Activated CD4-positive, alpha-beta memory T cell treated with anti-CD3 and anti-CD28 coated beads for 36 hours (primary cell): ENCODE measurements at regions of chrX and their contacts with region 1.

Region 1: GRCh38 chrX:107025545-107025944 is 25.5 kb upstream of the MORC4 start:
- DNase-seq: no peak
- H3K4me3 Mint-ChIP-seq: no peak overlapping the region
- H3K27ac Mint-ChIP-seq: no peak overlapping the region
- H3K4me1 Mint-ChIP-seq: no peaks in the 10 kb centered on the region
- H3K27me3 Mint-ChIP-seq: no peaks in the 10 kb centered on the region

Region 2: GRCh38 chrX:106963111-106963510 is 62.4 kb before region 1 on chrX:
- CTCF ChIA-PET with region 1: no interaction called
- POLR2A ChIA-PET with region 1: no interaction called
- intact Hi-C with region 1: no loop called
- DNase-seq: no peak
- H3K4me3 Mint-ChIP-seq: no peak overlapping the region
- H3K27ac Mint-ChIP-seq: no peak overlapping the region
- H3K4me1 Mint-ChIP-seq: no peaks in the 10 kb centered on the region
- H3K27me3 Mint-ChIP-seq: no peaks in the 10 kb centered on the region

Region 3: DNA sequence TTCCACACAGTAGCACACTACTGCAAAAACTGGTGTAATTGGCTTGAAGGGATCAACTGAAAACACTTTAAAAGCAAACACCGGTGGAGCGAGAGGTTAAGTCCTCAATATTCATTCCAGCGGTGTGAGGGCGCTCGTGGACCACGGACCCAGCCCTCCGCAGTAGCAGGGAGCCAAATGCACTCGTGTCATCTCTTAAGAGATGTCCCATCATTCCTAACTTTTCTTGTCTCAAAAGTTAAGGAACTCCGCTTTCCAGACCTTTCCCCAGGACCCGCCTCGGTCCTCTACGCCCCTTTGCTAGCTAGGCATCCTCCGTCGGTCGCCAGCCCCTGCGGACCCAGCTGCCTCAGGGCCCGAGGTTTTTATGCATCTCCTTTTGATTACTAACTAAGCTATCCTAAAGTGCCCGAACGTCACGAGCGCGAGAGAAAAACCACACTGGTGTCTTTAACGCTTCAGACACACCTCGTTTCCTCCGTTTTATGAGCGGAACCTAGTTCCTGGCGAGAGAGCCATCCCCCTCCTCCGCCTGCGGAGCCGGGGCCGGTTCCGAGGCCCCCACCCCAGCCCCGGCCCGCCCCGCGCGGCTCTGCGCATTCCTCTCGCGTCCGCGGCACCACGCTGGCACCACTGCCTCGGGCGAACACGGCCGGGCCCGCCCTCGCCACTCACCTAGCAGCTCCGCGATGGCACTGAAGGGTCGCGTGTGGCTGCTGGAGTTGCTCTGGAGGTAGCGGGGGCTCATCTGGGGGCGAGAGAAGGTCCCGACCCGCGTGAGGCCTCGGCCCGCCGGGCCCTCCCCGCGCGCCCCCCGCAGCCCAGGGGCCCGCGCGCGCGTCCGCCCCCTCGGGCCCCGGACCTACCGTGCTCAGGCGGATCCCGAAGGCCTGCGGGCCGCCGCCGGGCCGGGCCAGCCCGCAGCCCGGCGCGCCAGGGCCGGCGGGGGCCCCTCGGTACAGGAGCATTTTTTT is 26.3 kb before region 1 on chrX:
- CTCF ChIA-PET with region 1: no interaction called
- POLR2A ChIA-PET with region 1: no interaction called
- intact Hi-C with region 1: no loop called
- DNase-seq: peak; percentile 62
- H3K4me3 Mint-ChIP-seq: peak overlapping the region; percentile 70
- H3K27ac Mint-ChIP-seq: no peak overlapping the region
- H3K4me1 Mint-ChIP-seq: peaks cover 7% of the 10 kb centered on the region
- H3K27me3 Mint-ChIP-seq: no peaks in the 10 kb centered on the region

Region 4: DNA sequence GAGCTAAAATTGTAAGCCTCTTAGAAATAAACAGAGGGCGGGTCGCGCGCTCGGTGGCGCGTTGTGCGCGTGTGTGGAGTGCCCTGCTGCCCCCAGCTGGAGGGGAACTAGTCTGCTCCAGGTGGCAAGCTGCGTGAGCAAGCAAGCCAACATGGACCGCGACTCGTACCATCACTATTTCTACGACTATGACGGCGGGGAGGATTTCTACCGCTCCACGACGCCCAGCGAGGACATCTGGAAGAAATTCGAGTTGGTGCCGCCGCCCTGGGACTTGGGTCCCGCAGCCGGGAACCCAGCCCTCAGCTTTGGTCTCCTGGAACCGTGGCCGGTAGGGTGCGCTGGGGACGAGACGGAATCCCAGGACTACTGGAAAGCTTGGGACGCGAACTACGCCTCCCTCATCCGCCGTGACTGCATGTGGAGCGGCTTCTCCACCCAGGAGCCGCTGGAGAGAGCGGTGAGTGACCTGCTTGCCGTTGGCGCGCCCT is 246.9 kb after region 1 on chrX:
- CTCF ChIA-PET with region 1: no interaction called
- POLR2A ChIA-PET with region 1: no interaction called
- intact Hi-C with region 1: loop called (anchors 10 kb)
- DNase-seq: peak; percentile 22
- H3K4me3 Mint-ChIP-seq: no peak overlapping the region
- H3K27ac Mint-ChIP-seq: no peak overlapping the region
- H3K4me1 Mint-ChIP-seq: peaks cover 4% of the 10 kb centered on the region
- H3K27me3 Mint-ChIP-seq: peaks cover 11% of the 10 kb centered on the region